BJ (cell line): ENCODE measurements at regions of chr10 and their contacts with region 1.

Region 1: GRCh38 chr10:25888627-25889026 is 45.4 kb upstream of the MYO3A start:
- DNase-seq: no peak
- H3K4me3 ChIP-seq: no peak overlapping the region
- H3K27me3 ChIP-seq: no peaks in the 10 kb centered on the region
- CTCF ChIP-seq: no peak

Region 2: DNA sequence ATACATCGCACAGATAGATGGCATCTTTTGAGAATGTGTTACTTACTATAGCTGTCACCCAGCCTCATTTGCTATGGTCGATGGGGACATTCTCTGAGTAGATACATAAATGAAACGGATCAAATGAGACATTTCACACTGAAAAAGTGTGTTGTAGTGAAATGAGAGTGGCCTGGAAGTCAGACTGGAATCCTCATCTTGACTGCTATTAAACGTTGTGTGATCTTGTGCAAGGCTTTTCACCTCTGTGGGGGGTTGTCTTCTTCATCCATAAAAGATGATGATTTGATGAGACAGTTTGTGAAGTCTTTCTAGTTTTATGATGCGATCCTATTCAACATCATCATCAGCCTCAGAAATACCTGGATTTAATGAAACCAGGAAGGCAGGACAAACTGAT is 110.0 kb before region 1 on chr10:
- CTCF ChIA-PET with region 1: no interaction called
- POLR2A ChIA-PET with region 1: no interaction called
- DNase-seq: no peak
- H3K4me3 ChIP-seq: no peak overlapping the region
- H3K27me3 ChIP-seq: no peaks in the 10 kb centered on the region
- CTCF ChIP-seq: no peak

Region 3: DNA sequence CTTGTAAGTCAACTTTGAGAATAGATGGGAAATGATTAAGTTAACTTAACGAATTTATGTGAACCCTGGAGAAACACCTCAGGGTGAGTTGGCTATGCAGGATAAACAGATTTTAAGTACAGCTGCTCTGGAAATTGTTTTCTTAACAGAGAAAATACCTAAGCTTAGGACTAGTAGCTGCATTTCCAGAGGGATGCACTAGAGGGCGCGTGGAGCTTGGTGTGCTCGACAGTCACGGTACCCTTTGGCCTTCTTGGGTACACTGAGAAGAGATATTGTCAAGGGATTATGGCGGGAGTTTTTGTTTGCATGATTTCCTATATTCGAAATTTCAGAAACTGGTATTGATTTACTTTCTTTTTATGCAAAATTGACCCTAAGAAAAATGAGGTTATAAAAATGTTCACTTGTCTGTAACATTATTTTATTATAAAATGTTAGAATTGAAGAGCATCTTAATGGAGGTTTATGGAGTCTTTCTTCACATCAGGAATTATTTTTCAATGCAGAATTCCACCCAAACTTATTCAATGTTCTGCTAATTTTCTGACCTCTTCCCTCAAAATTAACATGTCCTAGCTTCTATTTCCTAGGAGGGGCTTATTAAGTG is 13.0 kb before region 1 on chr10:
- CTCF ChIA-PET with region 1: interaction called, 12 read pairs
- POLR2A ChIA-PET with region 1: no interaction called
- DNase-seq: no peak
- H3K4me3 ChIP-seq: no peak overlapping the region
- H3K27me3 ChIP-seq: no peaks in the 10 kb centered on the region
- CTCF ChIP-seq: peak; percentile 79

Region 4: GRCh38 chr10:26015092-26015491 is 126.5 kb after region 1 on chr10:
- CTCF ChIA-PET with region 1: no interaction called
- POLR2A ChIA-PET with region 1: no interaction called
- DNase-seq: no peak
- H3K4me3 ChIP-seq: no peak overlapping the region
- H3K27me3 ChIP-seq: no peaks in the 10 kb centered on the region
- CTCF ChIP-seq: no peak

Region 5: GRCh38 chr10:26044141-26044749 is 155.6 kb after region 1 on chr10:
- CTCF ChIA-PET with region 1: no interaction called
- POLR2A ChIA-PET with region 1: no interaction called
- DNase-seq: no peak
- H3K4me3 ChIP-seq: no peak overlapping the region
- H3K27me3 ChIP-seq: no peaks in the 10 kb centered on the region
- CTCF ChIP-seq: no peak